Stomach (tissue), 19 donors: ENCODE measurements at regions of chr20 and their contacts with region 1.

Region 1: DNA sequence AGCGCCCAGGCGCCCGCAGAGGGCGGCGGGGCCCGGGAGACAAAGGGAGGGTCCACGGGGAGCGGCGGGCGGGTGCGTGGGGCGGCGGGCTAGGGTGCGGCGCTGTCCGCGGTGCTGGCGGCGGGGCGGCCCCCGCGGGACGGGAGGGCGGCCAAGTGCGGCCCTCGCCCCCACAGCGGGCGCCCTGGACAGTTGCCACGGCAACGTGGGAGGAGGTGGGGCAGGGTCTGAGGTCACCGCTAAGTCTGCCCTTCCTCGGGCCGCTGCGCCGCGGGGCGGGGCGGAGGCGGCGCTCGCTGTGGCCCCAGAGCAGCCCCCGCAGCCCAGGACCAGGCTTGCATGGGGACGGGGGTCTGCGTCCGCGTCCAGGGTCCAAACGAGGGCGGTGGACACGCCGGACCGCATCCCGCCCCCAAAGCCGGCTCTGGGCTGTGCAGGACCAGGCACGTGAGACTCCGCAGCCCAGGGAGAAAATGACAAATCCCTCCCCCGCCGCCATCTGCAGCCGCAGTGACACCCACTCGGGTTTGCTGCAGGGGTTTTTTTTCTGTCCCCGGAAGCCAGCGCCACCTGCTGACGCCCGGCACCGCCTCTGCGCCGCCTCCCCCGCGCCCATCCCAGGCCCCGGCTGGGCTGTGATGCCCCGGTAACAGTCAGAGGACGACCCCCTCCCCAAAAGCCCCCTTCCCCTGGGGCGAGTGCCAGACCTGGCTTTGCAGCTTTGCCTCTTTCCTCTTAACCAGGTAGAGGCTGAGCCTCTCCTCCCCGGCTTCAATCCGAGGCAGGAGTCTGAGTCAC is 36.8 kb downstream of the YTHDF1 start:
- DNase-seq: peak; percentile 36 to 64
- H3K4me3 ChIP-seq: peak overlapping the region; percentile 17 to 48 (median 34)
- H3K27ac ChIP-seq: no peak overlapping the region
- H3K4me1 ChIP-seq: peaks cover 24 to 51% (median 35%) of the 10 kb centered on the region in 4 donors
- H3K27me3 ChIP-seq: peaks cover 57 to 100% (median 93%) of the 10 kb centered on the region in 3 donors
- CTCF ChIP-seq: peak in 4 of 7 experiments; percentile 24 to 53 (median 28)
- EP300 ChIP-seq: no peak
- POLR2A ChIP-seq: no peak

Region 2: GRCh38 chr20:62972270-62973032 is 206.6 kb before region 1 on chr20:
- intact Hi-C with region 1: no loop called
- DNase-seq: peak; percentile 90 to 95
- H3K4me3 ChIP-seq: peak overlapping the region; percentile 19 to 39 (median 30)
- H3K27ac ChIP-seq: no peak overlapping the region
- H3K4me1 ChIP-seq: peaks cover 7 to 18% (median 14%) of the 10 kb centered on the region in 4 donors
- H3K27me3 ChIP-seq: peaks cover 19 to 93% (median 69%) of the 10 kb centered on the region in 3 donors
- CTCF ChIP-seq: peak in 5 of 7 experiments; percentile 77 to 87 (median 86)
- EP300 ChIP-seq: no peak
- POLR2A ChIP-seq: no peak

Region 3: DNA sequence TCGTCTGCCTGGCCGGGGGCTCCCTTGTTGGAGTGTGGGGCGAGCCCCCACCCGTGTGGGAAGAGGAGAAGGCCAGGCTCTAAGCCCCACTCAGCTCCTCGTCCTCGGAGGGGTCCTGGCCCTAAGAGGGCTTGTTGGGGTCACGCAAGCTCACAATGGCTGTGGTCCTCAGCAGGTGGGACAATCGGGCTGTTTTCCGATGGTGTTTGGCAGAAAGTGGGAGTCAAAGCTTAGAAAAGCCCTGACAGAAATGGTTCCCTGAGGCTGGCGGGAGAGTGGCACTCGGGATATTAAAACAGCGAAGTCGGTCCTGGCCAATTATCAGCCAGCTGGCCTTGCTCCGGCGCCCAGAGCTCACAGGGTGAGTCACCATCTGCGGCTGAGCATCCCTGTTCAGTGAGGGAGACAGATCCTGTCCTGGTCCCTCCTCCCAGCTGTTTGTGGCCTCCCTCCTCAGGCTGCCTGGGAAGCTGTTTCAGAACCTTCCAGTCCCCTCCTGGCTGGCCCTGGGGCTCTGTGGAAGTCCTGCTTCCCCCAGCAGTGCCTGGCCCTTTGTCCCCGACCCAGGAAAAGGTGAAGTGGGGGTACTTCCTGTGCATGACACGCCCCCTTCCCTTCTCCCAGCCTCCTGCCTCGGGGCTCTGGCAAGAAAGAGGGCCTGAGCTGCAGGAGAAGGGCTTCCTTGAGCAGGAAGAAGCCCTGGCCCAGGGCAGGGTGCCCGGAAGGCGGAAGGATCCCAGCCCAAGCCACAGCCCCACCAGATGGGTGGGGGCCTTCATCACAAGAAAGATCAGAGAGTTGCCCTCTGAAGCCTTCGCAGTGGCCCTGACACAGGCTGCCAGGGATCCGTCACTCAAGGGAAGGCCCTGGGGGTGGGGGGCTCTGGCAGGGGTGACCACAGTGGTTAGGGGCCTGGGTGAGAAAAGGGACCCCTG is 118.8 kb before region 1 on chr20:
- intact Hi-C with region 1: loop called (anchors 5 kb)
- DNase-seq: peak in 1 of 2 donors; percentile 21
- H3K4me3 ChIP-seq: no peak overlapping the region
- H3K27ac ChIP-seq: no peak overlapping the region
- H3K4me1 ChIP-seq: peaks cover 6 to 10% (median 8%) of the 10 kb centered on the region in 4 donors
- H3K27me3 ChIP-seq: peaks cover 0 to 86% (median 57%) of the 10 kb centered on the region in 3 donors
- CTCF ChIP-seq: no peak
- EP300 ChIP-seq: no peak
- POLR2A ChIP-seq: no peak

Region 4: GRCh38 chr20:63090682-63091579 is 88.2 kb before region 1 on chr20:
- intact Hi-C with region 1: no loop called
- DNase-seq: no peak
- H3K4me3 ChIP-seq: no peak overlapping the region
- H3K27ac ChIP-seq: no peak overlapping the region
- H3K4me1 ChIP-seq: no peaks in the 10 kb centered on the region
- H3K27me3 ChIP-seq: peaks cover 0 to 89% (median 18%) of the 10 kb centered on the region in 3 donors
- CTCF ChIP-seq: no peak
- EP300 ChIP-seq: no peak
- POLR2A ChIP-seq: no peak